K562 (cell line): ENCODE measurements at regions of chr6 and their contacts with region 1.

Region 1: GRCh38 chr6:86937219-86938079 is at the start of gene HTR1E:
- DNase-seq: peak; percentile 51 to 70 (median 56)
- ATAC-seq: peak; percentile 99
- H3K4me3 ChIP-seq: no peak within 1 kb of the TSS
- H3K27ac ChIP-seq: no peak within 1 kb of the TSS
- H3K4me1 ChIP-seq: peaks cover 0 to 7% of the 10 kb centered on the region in 2 experiments; a peak in 1 of 5 replicates
- H3K27me3 ChIP-seq: no peaks in the 10 kb centered on the region; a peak in 1 of 5 replicates
- CTCF ChIP-seq: peak; percentile 69 to 81 (median 69)
- EP300 ChIP-seq: no peak
- POLR2A ChIP-seq: no peak
- RAD21 ChIP-seq: peak in 1 of 2 experiments; percentile 79; a peak in 3 of 4 replicates
- polyA plus RNA-seq, gene HTR1E: not detected

Region 2: GRCh38 chr6:85756982-85757381 is 1180.5 kb before region 1 on chr6:
- CTCF ChIA-PET with region 1: interaction called, 3 read pairs
- POLR2A ChIA-PET with region 1: no interaction called
- in situ Hi-C with region 1: no loop called
- intact Hi-C with region 1: loop called (anchors 2 kb)
- DNase-seq: peak in 2 of 4 experiments; percentile 12
- ATAC-seq: no peak
- H3K4me3 ChIP-seq: no peak overlapping the region
- H3K27ac ChIP-seq: no peak overlapping the region
- H3K4me1 ChIP-seq: no peaks in the 10 kb centered on the region
- H3K27me3 ChIP-seq: peaks cover 0 to 2% of the 10 kb centered on the region in 2 experiments; a peak in 1 of 5 replicates
- CTCF ChIP-seq: peak in 2 of 3 experiments; percentile 28 to 58; a peak in 3 of 6 replicates
- EP300 ChIP-seq: no peak
- POLR2A ChIP-seq: no peak
- RAD21 ChIP-seq: peak; percentile 43 to 66

Region 3: DNA sequence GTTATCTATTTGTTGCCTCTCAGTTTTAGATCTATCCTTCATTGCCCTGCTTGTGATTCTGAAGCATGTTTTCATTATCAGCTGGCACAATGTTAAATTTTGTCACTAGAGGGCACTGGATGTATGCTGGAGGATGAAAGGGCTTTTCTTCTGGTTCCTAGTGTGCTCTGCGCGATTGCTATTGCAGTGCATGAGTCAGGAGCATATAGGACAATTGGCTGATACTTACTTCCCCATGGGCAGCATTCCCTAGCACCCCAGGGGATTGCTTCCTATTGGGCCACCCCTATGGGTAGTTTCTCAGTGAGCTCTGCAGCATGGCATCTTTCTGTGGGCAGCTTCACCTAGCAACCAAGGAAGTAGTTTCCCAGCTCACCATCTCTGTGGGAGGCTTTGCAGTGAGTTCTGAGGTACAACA is 1014.4 kb before region 1 on chr6:
- CTCF ChIA-PET with region 1: no interaction called
- POLR2A ChIA-PET with region 1: no interaction called
- in situ Hi-C with region 1: no loop called
- intact Hi-C with region 1: loop called (anchors 1 kb)
- DNase-seq: peak in 2 of 4 experiments; percentile 17 to 36
- ATAC-seq: peak; percentile 79
- H3K4me3 ChIP-seq: no peak overlapping the region
- H3K27ac ChIP-seq: no peak overlapping the region
- H3K4me1 ChIP-seq: no peaks in the 10 kb centered on the region
- H3K27me3 ChIP-seq: no peaks in the 10 kb centered on the region
- CTCF ChIP-seq: peak; percentile 51 to 70 (median 60); a peak in 5 of 6 replicates
- EP300 ChIP-seq: no peak
- POLR2A ChIP-seq: no peak
- RAD21 ChIP-seq: peak; percentile 66 to 75

Region 4: GRCh38 chr6:86537263-86537861 is 400.1 kb before region 1 on chr6:
- CTCF ChIA-PET with region 1: no interaction called
- POLR2A ChIA-PET with region 1: no interaction called
- in situ Hi-C with region 1: loop called (anchors 10 kb)
- intact Hi-C with region 1: no loop called
- DNase-seq: no peak
- ATAC-seq: no peak
- H3K4me3 ChIP-seq: no peak overlapping the region
- H3K27ac ChIP-seq: no peak overlapping the region
- H3K4me1 ChIP-seq: no peaks in the 10 kb centered on the region
- H3K27me3 ChIP-seq: no peaks in the 10 kb centered on the region
- CTCF ChIP-seq: no peak
- EP300 ChIP-seq: no peak
- POLR2A ChIP-seq: no peak
- RAD21 ChIP-seq: no peak